ENCODE measurements at regions of chr13 and their contacts with region 1.

Region 1: GRCh38 chr13:82606008-82606407 is 1276.3 kb downstream of the SLITRK1 start:
- DNase-seq: no peak
- ATAC-seq: no peak
- H3K4me3 ChIP-seq: no peak overlapping the region
- H3K4me3 Mint-ChIP-seq: no peak overlapping the region
- H3K27ac ChIP-seq: no peak overlapping the region
- H3K27ac Mint-ChIP-seq: no peak overlapping the region
- H3K4me1 ChIP-seq: no peaks in the 10 kb centered on the region
- H3K4me1 Mint-ChIP-seq: no peaks in the 10 kb centered on the region
- H3K27me3 ChIP-seq: no peaks in the 10 kb centered on the region
- H3K27me3 Mint-ChIP-seq: no peaks in the 10 kb centered on the region
- CTCF ChIP-seq: no peak

Region 2: DNA sequence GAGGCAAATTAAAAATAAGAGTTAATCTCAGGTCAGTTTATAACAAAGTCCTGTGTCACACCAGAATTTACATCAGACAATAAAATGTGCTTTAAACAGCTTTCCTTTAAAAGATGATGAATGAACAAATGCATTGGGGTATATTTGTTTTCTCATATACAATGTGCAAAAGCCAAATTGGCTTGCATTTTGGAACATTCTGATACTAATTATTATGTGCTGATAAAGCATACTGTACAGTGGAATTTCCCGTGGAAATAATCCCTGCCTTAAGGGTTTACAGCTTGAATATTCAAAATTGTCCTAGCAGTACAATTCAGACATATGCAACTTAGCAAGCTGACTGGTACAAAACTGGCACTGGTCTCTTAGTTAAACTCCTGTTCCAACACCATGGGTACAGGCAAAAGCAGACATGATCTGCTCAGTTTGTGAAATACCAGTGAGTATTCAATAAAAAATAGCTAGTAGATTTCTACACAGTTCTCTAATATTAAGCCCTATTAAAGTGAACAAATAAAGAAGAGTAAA is 902.8 kb after region 1 on chr13:
- CTCF ChIA-PET with region 1: no interaction called
- POLR2A ChIA-PET with region 1: no interaction called
- intact Hi-C with region 1: loop called in 1 of 2 experiments (anchors 5 kb)
- DNase-seq: no peak
- ATAC-seq: no peak
- H3K4me3 ChIP-seq: no peak overlapping the region
- H3K4me3 Mint-ChIP-seq: no peak overlapping the region
- H3K27ac ChIP-seq: no peak overlapping the region
- H3K27ac Mint-ChIP-seq: no peak overlapping the region
- H3K4me1 ChIP-seq: no peaks in the 10 kb centered on the region
- H3K4me1 Mint-ChIP-seq: no peaks in the 10 kb centered on the region
- H3K27me3 ChIP-seq: no peaks in the 10 kb centered on the region
- H3K27me3 Mint-ChIP-seq: no peaks in the 10 kb centered on the region
- CTCF ChIP-seq: no peak

Region 3: GRCh38 chr13:83716121-83716520 is 1110.1 kb after region 1 on chr13:
- CTCF ChIA-PET with region 1: no interaction called
- POLR2A ChIA-PET with region 1: no interaction called
- intact Hi-C with region 1: no loop called
- DNase-seq: no peak
- ATAC-seq: no peak
- H3K4me3 ChIP-seq: no peak overlapping the region
- H3K4me3 Mint-ChIP-seq: no peak overlapping the region
- H3K27ac ChIP-seq: no peak overlapping the region
- H3K27ac Mint-ChIP-seq: no peak overlapping the region
- H3K4me1 ChIP-seq: no peaks in the 10 kb centered on the region
- H3K4me1 Mint-ChIP-seq: no peaks in the 10 kb centered on the region
- H3K27me3 ChIP-seq: no peaks in the 10 kb centered on the region
- H3K27me3 Mint-ChIP-seq: no peaks in the 10 kb centered on the region
- CTCF ChIP-seq: no peak